CD8-positive, alpha-beta memory T cell (primary cell): ENCODE measurements at regions of chr22 and their contacts with region 1.

Region 1: GRCh38 chr22:41800348-41801146 is at the start of gene CCDC134:
- DNase-seq: peak; percentile 88 to 94 (median 91)
- H3K4me3 ChIP-seq: peak within 1 kb of the TSS; percentile 96
- H3K4me3 Mint-ChIP-seq: peak within 1 kb of the TSS; percentile 87 to 99 (median 94)
- H3K27ac ChIP-seq: peak within 1 kb of the TSS; percentile 96
- H3K27ac Mint-ChIP-seq: peak within 1 kb of the TSS; percentile 89 to 100 (median 98)
- H3K4me1 ChIP-seq: peaks cover 33% of the 10 kb centered on the region
- H3K4me1 Mint-ChIP-seq: peaks cover 28 to 58% (median 44%) of the 10 kb centered on the region in 3 donors
- H3K27me3 ChIP-seq: no peaks in the 10 kb centered on the region
- H3K27me3 Mint-ChIP-seq: no peaks in the 10 kb centered on the region
- total RNA-seq, gene CCDC134: 17.9 to 19.9 TPM

Region 2: DNA sequence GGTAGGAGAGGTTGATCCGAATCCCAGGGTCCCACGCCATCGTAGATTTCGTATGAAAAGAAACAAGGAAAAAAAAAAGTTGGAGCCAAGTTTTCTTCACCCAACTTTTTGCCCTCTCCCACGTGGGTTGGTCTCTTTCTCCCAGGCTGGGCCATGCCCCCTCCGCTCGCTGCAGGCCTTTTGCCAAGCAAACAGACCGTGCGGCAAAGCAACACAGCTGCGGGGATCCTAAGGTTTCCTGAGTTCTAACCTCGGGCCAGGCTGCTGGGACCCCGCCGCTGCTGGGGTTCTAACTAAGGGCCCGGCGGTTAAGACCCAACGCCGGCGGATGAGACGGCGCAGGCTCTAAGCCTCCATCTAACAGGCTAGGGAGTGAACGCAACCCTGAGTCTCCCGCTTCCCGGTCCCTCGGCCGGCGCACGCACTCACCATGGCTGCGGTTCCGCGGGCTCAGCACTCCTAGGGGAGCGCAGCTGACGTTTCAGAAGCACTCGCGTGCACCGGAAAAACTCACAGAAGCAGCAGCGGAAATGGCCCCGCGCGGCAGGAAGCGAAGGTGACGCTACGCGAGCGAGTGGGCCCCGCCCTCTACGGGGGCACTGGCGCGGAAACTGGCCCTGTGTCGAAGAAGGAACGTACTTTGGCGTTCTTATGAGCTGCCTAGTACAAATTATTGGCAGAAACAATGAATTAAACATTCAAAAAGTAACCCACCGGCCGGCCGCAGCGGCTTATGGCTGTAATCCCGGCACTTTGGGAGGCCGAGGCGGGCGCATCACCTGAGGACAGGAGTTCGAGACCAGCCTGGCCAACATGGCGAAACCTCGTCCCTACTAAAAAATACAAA is 112.0 kb before region 1 on chr22 and contains the start of gene SNU13:
- CTCF ChIA-PET with region 1: no interaction called
- POLR2A ChIA-PET with region 1: interaction called, 11 read pairs
- DNase-seq: peak; percentile 90 to 94 (median 91)
- H3K4me3 ChIP-seq: peak within 1 kb of the TSS; percentile 89
- H3K4me3 Mint-ChIP-seq: peak within 1 kb of the TSS; percentile 92 to 98 (median 95)
- H3K27ac ChIP-seq: peak within 1 kb of the TSS; percentile 98
- H3K27ac Mint-ChIP-seq: peak within 1 kb of the TSS; percentile 92 to 99 (median 98)
- H3K4me1 ChIP-seq: peaks cover 13% of the 10 kb centered on the region
- H3K4me1 Mint-ChIP-seq: peaks cover 25 to 47% (median 37%) of the 10 kb centered on the region in 3 donors
- H3K27me3 ChIP-seq: no peaks in the 10 kb centered on the region
- H3K27me3 Mint-ChIP-seq: no peaks in the 10 kb centered on the region
- total RNA-seq, gene SNU13: 315 to 324 TPM

Region 3: DNA sequence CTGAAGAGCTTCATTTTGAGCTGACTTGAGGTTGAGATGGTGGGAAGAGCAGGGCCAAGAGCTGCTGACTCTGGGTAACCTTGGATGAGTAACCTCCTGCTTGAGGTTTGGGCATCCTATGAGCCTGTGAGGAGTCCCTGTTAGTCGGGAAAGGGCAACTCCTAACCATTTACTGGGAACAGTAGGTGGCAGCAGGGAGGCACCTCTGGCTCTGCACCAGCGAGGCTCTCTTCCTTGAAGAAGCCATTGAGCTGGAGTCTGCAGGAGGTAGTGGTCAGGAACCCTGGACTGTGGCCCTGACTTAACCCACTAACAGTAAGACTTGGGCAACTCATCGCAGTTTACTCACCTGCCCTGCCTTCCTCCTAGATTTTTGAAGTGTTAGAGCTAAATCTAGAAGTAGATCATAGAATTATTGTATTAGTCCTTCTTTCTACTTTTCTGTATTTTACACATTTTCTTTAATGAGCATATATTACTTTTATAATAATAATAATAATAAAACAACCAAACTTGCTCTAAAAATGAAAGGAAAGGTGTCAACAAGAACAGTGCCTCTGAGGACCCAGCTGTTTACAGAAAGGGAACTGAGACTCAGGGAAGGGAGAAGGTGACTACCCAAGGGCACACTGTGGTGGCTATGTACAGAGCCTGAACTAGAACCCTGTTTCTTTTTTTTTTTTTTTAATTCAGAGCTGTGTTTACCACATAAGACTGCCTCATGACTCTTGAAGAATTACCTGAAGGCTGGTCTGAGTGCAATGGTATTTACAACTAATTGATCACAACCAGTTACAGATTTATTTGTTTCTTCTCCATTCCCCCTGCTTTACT is 53.8 kb before region 1 on chr22:
- CTCF ChIA-PET with region 1: interaction called, 19 read pairs
- POLR2A ChIA-PET with region 1: interaction called, 6 read pairs
- DNase-seq: peak; percentile 26 to 70 (median 40)
- H3K4me3 ChIP-seq: no peak overlapping the region
- H3K4me3 Mint-ChIP-seq: no peak overlapping the region
- H3K27ac ChIP-seq: no peak overlapping the region
- H3K27ac Mint-ChIP-seq: peak overlapping the region in 3 of 8 donors; percentile 26 to 38 (median 38)
- H3K4me1 ChIP-seq: no peaks in the 10 kb centered on the region
- H3K4me1 Mint-ChIP-seq: peaks cover 0 to 4% (median 3%) of the 10 kb centered on the region in 3 donors
- H3K27me3 ChIP-seq: no peaks in the 10 kb centered on the region
- H3K27me3 Mint-ChIP-seq: peaks cover 3 to 28% of the 10 kb centered on the region in 2 donors

Region 4: DNA sequence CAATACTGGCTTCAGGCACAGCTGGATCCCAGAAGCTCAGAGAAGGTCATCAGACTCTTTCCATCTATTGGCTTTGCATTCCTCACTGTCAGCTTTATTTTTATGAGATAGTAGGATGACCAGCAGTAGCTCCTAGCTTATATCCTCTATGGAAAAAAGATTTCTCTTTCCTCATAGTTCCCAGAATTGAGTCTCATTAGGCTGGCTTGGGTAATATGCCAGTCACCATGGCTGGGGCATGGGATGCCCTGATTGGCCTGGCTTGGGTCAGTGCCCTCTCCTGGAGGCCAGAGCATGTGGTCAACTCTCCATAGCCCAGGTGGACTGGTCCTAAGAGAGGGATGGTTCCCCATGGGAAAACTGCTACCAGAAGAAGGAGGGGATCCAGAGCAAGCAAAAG is 14.1 kb before region 1 on chr22:
- CTCF ChIA-PET with region 1: interaction called, 62 read pairs
- POLR2A ChIA-PET with region 1: interaction called, 153 read pairs
- DNase-seq: no peak
- H3K4me3 ChIP-seq: no peak overlapping the region
- H3K4me3 Mint-ChIP-seq: no peak overlapping the region
- H3K27ac ChIP-seq: no peak overlapping the region
- H3K27ac Mint-ChIP-seq: peak overlapping the region in 5 of 8 donors; percentile 5 to 80 (median 40)
- H3K4me1 ChIP-seq: peaks cover 46% of the 10 kb centered on the region
- H3K4me1 Mint-ChIP-seq: peaks cover 44 to 70% (median 60%) of the 10 kb centered on the region in 3 donors
- H3K27me3 ChIP-seq: no peaks in the 10 kb centered on the region
- H3K27me3 Mint-ChIP-seq: no peaks in the 10 kb centered on the region

Region 5: DNA sequence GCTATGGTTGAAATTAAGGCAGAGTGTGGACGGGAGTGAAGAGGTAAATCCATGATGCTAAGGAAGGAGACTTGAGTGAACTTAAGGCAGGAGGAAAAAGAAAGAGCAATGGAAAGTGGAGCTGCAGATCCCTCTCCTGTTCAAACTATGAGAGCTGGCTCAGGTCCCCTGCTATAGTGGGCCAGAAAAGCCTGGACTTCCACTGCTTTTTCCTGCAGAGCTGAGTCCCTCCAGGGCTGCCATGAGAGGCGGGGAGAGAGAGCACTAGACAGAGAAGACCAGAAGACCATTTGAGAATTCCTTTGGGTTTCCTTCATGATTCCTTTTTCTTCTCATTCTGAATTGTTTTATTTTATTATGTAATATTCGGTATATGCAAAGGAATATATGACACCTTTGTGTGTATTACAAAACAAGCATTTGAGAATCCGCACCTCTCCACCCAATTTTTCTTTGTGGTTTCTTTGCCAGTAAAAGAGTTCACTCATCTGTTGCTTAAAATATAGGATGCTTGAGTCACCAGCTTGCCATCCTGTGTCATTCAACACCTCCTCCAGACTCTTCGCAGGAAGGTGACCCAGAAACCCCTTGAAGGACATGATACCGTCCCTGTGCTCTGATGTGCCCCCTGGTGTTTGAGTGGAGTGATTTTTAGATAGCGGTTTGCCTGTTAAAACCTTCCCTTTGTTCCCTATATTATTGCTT is 56.8 kb after region 1 on chr22:
- CTCF ChIA-PET with region 1: interaction called, 8 read pairs
- POLR2A ChIA-PET with region 1: interaction called, 12 read pairs
- DNase-seq: peak; percentile 59 to 77 (median 69)
- H3K4me3 ChIP-seq: no peak overlapping the region
- H3K4me3 Mint-ChIP-seq: peak overlapping the region in 6 of 7 donors; percentile 11 to 66 (median 40)
- H3K27ac ChIP-seq: no peak overlapping the region
- H3K27ac Mint-ChIP-seq: peak overlapping the region; percentile 81 to 96 (median 88)
- H3K4me1 ChIP-seq: peaks cover 31% of the 10 kb centered on the region
- H3K4me1 Mint-ChIP-seq: peaks cover 41 to 68% (median 60%) of the 10 kb centered on the region in 3 donors
- H3K27me3 ChIP-seq: no peaks in the 10 kb centered on the region
- H3K27me3 Mint-ChIP-seq: no peaks in the 10 kb centered on the region